AG04449 (cell line): ENCODE measurements at regions of chr9 and their contacts with region 1.

Region 1: DNA sequence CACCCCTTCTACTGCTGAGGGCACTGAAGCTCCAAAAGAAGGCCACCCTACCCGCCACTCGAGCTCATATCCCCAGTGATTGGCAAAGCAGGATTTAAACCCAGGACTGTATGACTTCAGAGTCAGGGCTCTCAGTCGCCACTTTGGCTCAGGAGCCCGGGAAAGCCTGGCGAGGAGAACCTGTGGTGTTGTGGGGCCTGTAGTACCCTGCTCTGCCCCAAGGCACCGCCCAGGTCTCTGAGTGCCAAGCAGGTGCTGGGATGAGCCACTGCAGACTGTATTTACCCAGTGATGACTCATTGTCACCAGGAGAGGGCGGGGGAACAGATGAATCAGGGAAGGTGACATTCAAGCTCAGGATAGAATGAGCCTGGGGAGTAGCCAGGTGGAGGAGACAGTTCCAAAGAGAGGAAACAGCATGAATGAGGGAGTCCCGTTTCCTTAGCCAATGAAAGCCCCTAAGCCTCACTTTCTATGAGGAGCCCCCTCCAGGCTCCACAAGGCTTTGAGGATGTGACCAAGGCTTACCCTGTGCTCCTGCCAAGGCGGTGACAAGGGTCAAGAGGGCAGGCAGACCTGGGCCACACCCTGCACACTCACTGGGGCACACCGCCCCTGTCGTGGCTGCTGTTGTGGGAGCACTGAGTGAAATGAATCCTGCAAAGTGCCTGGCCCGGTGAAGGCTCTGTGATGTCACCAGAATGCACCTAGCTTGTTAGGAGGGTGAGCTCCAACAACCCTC is 17.8 kb upstream of the DPM2 start:
- DNase-seq: no peak
- H3K4me3 ChIP-seq: no peak overlapping the region
- CTCF ChIP-seq: no peak

Region 2: DNA sequence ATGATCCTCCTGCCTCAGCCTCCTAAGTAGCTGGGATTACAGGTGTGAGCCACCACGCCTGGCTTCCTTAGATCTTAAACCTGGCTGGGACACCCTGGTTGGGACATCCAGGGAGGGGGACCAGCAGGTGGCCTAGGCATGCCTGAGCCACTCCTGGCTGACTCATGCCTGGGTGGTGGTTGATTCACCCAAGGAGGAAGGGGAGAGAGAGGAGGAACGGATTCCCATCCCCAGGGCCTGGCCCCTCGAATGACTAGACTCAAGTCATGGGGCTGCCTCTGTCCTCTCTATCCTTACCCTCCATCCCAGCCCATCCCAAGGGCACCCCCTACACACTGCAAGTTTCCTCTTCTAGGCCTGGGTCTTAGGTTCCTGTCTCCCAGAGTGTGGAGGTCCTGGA is 12.6 kb after region 1 on chr9:
- CTCF ChIA-PET with region 1: interaction called, 10 read pairs
- POLR2A ChIA-PET with region 1: interaction called, 5 read pairs
- DNase-seq: no peak
- H3K4me3 ChIP-seq: no peak overlapping the region
- CTCF ChIP-seq: no peak

Region 3: DNA sequence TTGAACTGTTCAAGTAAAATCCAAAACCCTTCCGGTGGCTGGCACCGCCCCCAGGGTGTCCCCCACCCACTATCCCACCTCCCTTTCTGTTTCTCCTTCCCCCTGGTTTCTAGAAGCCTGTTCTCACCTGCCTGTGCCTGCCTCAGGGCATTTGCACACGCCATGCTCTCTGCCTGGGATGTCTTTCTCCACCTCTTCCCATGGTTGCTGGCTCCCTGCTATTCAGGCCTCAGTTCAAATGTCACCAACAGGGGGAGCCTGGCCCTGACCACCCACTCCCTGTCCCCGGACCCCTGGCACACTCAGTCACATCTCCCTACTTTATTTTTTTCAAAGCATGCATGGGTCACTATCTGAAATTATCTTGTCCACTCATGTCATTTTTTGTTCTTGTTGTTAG is 65.2 kb after region 1 on chr9:
- CTCF ChIA-PET with region 1: no interaction called
- POLR2A ChIA-PET with region 1: no interaction called
- DNase-seq: no peak
- H3K4me3 ChIP-seq: no peak overlapping the region
- CTCF ChIP-seq: no peak